ENCODE measurements at regions of chr22 and their contacts with region 1.

Region 1: DNA sequence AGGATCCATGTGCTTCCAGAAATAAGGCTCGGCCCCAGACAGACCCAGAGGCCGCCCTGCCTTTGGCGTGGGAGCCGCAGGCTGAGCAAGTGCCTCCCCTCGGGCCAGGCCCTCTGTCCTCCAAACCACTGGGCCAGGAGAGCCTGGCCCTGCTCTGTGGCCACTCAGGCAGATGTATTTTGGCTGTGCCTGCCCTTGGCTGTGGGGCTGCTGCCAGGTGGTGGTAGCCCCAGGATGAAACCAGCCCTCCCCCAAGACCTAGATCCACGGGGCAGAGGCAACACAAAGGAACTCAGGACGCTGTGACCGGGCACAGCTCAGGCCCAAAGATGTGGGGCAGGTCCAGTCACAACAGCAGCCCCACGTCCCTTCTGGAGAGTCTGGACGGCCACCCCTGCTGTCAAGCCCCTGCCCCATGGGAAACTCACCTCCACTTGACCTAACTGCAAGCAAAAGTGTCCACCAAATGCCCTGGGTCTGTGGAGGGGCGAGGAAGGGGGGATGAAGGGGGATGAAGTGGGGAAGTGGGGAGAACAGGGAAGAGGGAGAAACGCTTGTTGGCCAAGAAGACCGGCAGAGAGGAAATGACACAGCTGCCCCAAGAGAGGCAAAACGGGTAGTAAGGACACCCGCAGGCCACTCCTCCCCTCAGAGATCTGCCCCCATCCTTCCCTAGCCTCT is 23.9 kb downstream of the PISD start:
- DNase-seq: no peak
- ATAC-seq: peak; percentile 83
- H3K4me3 ChIP-seq: peak overlapping the region; percentile 71
- H3K27ac ChIP-seq: peak overlapping the region; percentile 98
- H3K4me1 ChIP-seq: peaks cover 52% of the 10 kb centered on the region
- H3K27me3 ChIP-seq: no peaks in the 10 kb centered on the region
- CTCF ChIP-seq: no peak
- EP300 ChIP-seq: 0 out of 4 replicates have a peak, but pooled peaks of 1 of the 2 experiments have one; percentile 9
- POLR2A ChIP-seq: 0 out of 2 replicates have a peak, but pooled peaks have one; percentile 56
- RAD21 ChIP-seq: no peak

Region 2: DNA sequence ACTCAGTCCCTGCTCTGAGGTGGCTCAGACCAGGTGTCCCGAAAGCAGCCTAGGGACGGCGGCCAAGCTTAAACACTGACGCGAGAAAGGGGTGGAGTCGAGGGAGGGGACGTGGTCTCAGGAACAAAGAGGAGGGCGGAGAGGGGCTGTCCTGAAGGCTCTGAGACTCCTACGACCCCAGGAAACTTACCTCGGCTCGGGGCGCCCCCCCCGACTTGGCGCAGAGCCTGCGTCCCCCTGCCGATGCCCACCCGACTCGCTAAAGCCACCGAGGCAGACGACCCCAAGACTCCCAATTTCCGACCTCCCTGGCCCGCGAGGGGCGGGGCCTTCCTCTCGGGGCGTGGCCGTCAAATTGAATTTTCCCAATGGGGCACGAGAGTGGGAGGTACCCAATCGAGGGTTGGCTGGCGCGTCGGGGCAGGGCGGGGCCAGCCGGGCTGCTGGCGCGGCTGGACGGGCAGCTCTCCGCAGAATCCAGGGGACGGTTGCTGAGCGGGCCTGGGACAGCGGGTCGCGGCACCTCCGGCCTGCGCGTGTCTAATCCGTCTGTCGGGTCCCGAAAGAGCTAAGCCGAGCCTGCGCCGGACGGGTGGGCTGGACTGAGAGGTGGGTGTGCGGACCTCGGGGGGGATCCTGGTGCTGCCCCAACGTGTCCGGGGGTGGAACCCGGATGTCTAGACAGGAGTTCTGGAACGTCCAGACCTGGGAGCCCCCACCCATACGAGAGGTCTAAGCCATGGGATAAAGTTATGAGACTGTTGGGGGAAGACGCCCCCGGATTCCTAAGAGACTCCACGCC is 557.0 kb before region 1 on chr22 and contains the start of gene SMTN:
- CTCF ChIA-PET with region 1: no interaction called
- POLR2A ChIA-PET with region 1: no interaction called
- RAD21 ChIA-PET with region 1: no interaction called
- SMC1A ChIA-PET with region 1: no interaction called
- in situ Hi-C with region 1: no loop called
- intact Hi-C with region 1: no loop called
- DNase-seq: peak; percentile 56
- ATAC-seq: peak; percentile 74
- H3K4me3 ChIP-seq: peak within 1 kb of the TSS; percentile 80
- H3K27ac ChIP-seq: peak within 1 kb of the TSS; percentile 71
- H3K4me1 ChIP-seq: peaks cover 28% of the 10 kb centered on the region
- H3K27me3 ChIP-seq: no peaks in the 10 kb centered on the region
- CTCF ChIP-seq: no peak
- EP300 ChIP-seq: no peak
- POLR2A ChIP-seq: peak; percentile 91
- RAD21 ChIP-seq: no peak
- polyA plus RNA-seq, gene SMTN: 0.92 to 2.6 TPM

Region 3: GRCh38 chr22:31345331-31346254 is 292.5 kb before region 1 on chr22:
- CTCF ChIA-PET with region 1: interaction called, 4 read pairs
- POLR2A ChIA-PET with region 1: interaction called, 3 read pairs
- RAD21 ChIA-PET with region 1: no interaction called
- SMC1A ChIA-PET with region 1: interaction called, 3 read pairs
- in situ Hi-C with region 1: loop called (anchors 5 kb)
- intact Hi-C with region 1: loop called (anchors 2 kb)
- DNase-seq: peak; percentile 39
- ATAC-seq: peak; percentile 35
- H3K4me3 ChIP-seq: peak overlapping the region; percentile 85
- H3K27ac ChIP-seq: peak overlapping the region; percentile 59
- H3K4me1 ChIP-seq: peaks cover 20% of the 10 kb centered on the region
- H3K27me3 ChIP-seq: no peaks in the 10 kb centered on the region
- CTCF ChIP-seq: peak; percentile 86 to 94 (median 86)
- EP300 ChIP-seq: no peak
- POLR2A ChIP-seq: peak; percentile 75
- RAD21 ChIP-seq: peak; percentile 73

Region 4: DNA sequence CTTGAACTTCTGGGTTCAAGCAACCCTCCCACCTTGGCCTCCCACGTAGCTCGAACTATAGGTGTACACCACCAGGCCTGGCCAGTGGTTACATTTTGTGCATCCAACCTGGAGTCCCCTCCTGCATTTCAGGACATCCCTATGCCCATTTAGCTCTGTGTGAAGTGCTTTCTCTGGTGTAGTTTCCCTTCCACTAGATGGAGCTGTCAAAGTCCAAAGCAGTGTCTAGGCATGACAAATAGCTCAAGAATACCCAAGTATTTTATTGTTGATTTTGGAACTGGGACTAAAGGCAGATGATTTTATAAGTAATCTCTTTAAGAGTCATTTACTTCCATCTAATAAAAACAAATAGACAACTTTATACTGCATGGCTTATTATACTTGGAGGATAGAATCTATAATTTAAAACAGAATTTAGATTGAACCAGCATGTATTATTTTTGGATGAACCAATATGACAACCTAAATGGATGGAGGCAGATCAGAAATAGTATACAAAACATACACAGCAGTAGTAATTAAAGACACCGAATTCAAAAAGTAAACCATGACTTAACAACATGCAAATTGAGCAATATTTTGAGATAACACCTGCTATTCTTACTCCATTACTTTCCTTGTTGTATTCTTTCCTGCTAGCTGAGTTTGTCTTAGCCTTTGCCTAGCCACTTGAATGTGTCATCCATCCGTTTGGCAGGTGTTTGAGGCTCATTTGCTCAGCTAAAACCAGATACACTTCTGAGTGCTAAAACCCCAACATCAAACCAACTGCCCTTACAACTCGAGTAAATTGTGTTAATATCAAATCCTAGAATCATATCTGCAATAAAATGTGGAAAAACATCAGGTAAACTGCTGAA is 186.1 kb before region 1 on chr22:
- CTCF ChIA-PET with region 1: interaction called, 30 read pairs
- POLR2A ChIA-PET with region 1: no interaction called
- RAD21 ChIA-PET with region 1: interaction called, 12 read pairs
- SMC1A ChIA-PET with region 1: interaction called, 16 read pairs
- in situ Hi-C with region 1: no loop called
- intact Hi-C with region 1: loop called (anchors 1 kb)
- DNase-seq: peak; percentile 15
- ATAC-seq: peak; percentile 92
- H3K4me3 ChIP-seq: no peak overlapping the region
- H3K27ac ChIP-seq: no peak overlapping the region
- H3K4me1 ChIP-seq: peaks cover 6% of the 10 kb centered on the region
- H3K27me3 ChIP-seq: no peaks in the 10 kb centered on the region
- CTCF ChIP-seq: peak; percentile 59 to 63 (median 59)
- EP300 ChIP-seq: no peak
- POLR2A ChIP-seq: no peak
- RAD21 ChIP-seq: peak; percentile 59

Region 5: GRCh38 chr22:31595271-31595670 is 42.8 kb before region 1 on chr22:
- CTCF ChIA-PET with region 1: no interaction called
- POLR2A ChIA-PET with region 1: no interaction called
- RAD21 ChIA-PET with region 1: no interaction called
- SMC1A ChIA-PET with region 1: no interaction called
- in situ Hi-C with region 1: no loop called
- intact Hi-C with region 1: no loop called
- DNase-seq: no peak
- ATAC-seq: no peak
- H3K4me3 ChIP-seq: no peak overlapping the region
- H3K27ac ChIP-seq: no peak overlapping the region
- H3K4me1 ChIP-seq: no peaks in the 10 kb centered on the region
- H3K27me3 ChIP-seq: no peaks in the 10 kb centered on the region
- CTCF ChIP-seq: no peak
- EP300 ChIP-seq: no peak
- POLR2A ChIP-seq: no peak
- RAD21 ChIP-seq: no peak

Region 6: GRCh38 chr22:31652911-31653684 is 15.0 kb after region 1 on chr22:
- CTCF ChIA-PET with region 1: interaction called, 11 read pairs
- POLR2A ChIA-PET with region 1: interaction called, 26 read pairs
- RAD21 ChIA-PET with region 1: interaction called, 37 read pairs
- SMC1A ChIA-PET with region 1: interaction called, 88 read pairs
- in situ Hi-C with region 1: no loop called
- intact Hi-C with region 1: no loop called
- DNase-seq: no peak
- ATAC-seq: peak; percentile 69
- H3K4me3 ChIP-seq: peak overlapping the region; percentile 61
- H3K27ac ChIP-seq: peak overlapping the region; percentile 85
- H3K4me1 ChIP-seq: peaks cover 39% of the 10 kb centered on the region
- H3K27me3 ChIP-seq: no peaks in the 10 kb centered on the region
- CTCF ChIP-seq: no peak
- EP300 ChIP-seq: no peak
- POLR2A ChIP-seq: no peak
- RAD21 ChIP-seq: no peak

Region 7: GRCh38 chr22:31730344-31730711 is 92.2 kb after region 1 on chr22:
- CTCF ChIA-PET with region 1: no interaction called
- POLR2A ChIA-PET with region 1: no interaction called
- RAD21 ChIA-PET with region 1: no interaction called
- SMC1A ChIA-PET with region 1: no interaction called
- in situ Hi-C with region 1: no loop called
- intact Hi-C with region 1: no loop called
- DNase-seq: no peak
- ATAC-seq: no peak
- H3K4me3 ChIP-seq: no peak overlapping the region
- H3K27ac ChIP-seq: no peak overlapping the region
- H3K4me1 ChIP-seq: peaks cover 4% of the 10 kb centered on the region
- H3K27me3 ChIP-seq: no peaks in the 10 kb centered on the region
- CTCF ChIP-seq: no peak; a peak in 1 of 6 replicates
- EP300 ChIP-seq: no peak
- POLR2A ChIP-seq: no peak
- RAD21 ChIP-seq: no peak

Region 8: GRCh38 chr22:31829505-31829904 is 191.4 kb after region 1 on chr22:
- CTCF ChIA-PET with region 1: no interaction called
- POLR2A ChIA-PET with region 1: no interaction called
- RAD21 ChIA-PET with region 1: no interaction called
- SMC1A ChIA-PET with region 1: no interaction called
- in situ Hi-C with region 1: no loop called
- intact Hi-C with region 1: no loop called
- DNase-seq: peak; percentile 19
- ATAC-seq: peak; percentile 68
- H3K4me3 ChIP-seq: no peak overlapping the region
- H3K27ac ChIP-seq: peak overlapping the region; percentile 30; the same call in 1 of the 2 replicates
- H3K4me1 ChIP-seq: peaks cover 11% of the 10 kb centered on the region
- H3K27me3 ChIP-seq: no peaks in the 10 kb centered on the region
- CTCF ChIP-seq: no peak
- EP300 ChIP-seq: no peak
- POLR2A ChIP-seq: no peak
- RAD21 ChIP-seq: no peak

Measured in GM12878 (cell line).